Naive thymus-derived CD8-positive, alpha-beta T cell (primary cell): ENCODE measurements at regions of chr16 and their contacts with region 1.

Region 1: GRCh38 chr16:87765776-87766484 is at the start of gene KLHDC4:
- DNase-seq: peak; percentile 83 to 93 (median 88)
- ATAC-seq: peak; percentile 69 to 73
- H3K4me3 Mint-ChIP-seq: peak within 1 kb of the TSS; percentile 97 to 100 (median 99)
- H3K27ac Mint-ChIP-seq: peak within 1 kb of the TSS; percentile 96 to 99 (median 99)
- H3K4me1 Mint-ChIP-seq: peaks cover 16 to 54% (median 52%) of the 10 kb centered on the region in 4 donors
- H3K27me3 Mint-ChIP-seq: no peaks in the 10 kb centered on the region
- polyA plus RNA-seq, gene KLHDC4: 28.7 to 33.3 (median 32.1) TPM

Region 2: DNA sequence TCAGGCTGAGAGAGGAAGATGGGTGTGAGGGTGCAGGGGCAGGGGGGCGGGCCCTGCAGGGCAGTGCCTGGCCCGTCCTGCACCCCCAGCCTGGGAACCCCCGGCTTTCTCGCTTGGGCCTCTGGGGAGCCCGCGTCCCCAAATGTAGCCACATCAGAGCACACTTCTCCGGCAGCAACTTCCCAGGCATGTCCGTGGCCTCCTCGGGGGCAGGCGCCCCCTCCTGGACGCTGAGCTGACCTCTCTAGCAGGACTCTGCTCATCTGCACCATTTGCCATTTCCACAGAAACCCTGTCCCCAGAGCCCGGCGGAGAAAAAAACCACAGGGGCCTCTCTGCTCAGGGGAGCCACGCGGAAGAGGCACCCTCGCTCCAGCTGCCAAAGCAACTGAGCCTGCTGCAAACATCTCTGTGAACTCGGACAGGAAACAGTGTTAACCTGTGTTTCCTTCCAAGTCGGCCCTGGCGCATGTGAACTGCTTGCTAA is 63.6 kb before region 1 on chr16:
- POLR2A ChIA-PET with region 1: interaction called, 13 read pairs
- DNase-seq: peak in 8 of 10 donors; percentile 7 to 42 (median 35)
- ATAC-seq: peak; percentile 69 to 74
- H3K4me3 Mint-ChIP-seq: peak overlapping the region; percentile 47 to 82 (median 68)
- H3K27ac Mint-ChIP-seq: peak overlapping the region; percentile 80 to 92 (median 88)
- H3K4me1 Mint-ChIP-seq: peaks cover 11 to 55% (median 46%) of the 10 kb centered on the region in 4 donors
- H3K27me3 Mint-ChIP-seq: no peaks in the 10 kb centered on the region

Region 3: GRCh38 chr16:87713451-87714229 is 52.3 kb before region 1 on chr16:
- POLR2A ChIA-PET with region 1: interaction called, 12 read pairs
- DNase-seq: peak in 9 of 10 donors; percentile 22 to 85 (median 54)
- ATAC-seq: peak; percentile 94 to 97
- H3K4me3 Mint-ChIP-seq: peak overlapping the region in 9 of 10 donors; percentile 29 to 80 (median 57)
- H3K27ac Mint-ChIP-seq: peak overlapping the region; percentile 25 to 98 (median 94)
- H3K4me1 Mint-ChIP-seq: peaks cover 10 to 53% (median 39%) of the 10 kb centered on the region in 4 donors
- H3K27me3 Mint-ChIP-seq: no peaks in the 10 kb centered on the region

Region 4: GRCh38 chr16:87778830-87779579 is 13.1 kb after region 1 on chr16:
- POLR2A ChIA-PET with region 1: interaction called, 24 read pairs
- DNase-seq: peak; percentile 83 to 93 (median 90)
- ATAC-seq: peak; percentile 85 to 87
- H3K4me3 Mint-ChIP-seq: peak overlapping the region in 9 of 10 donors; percentile 55 to 79 (median 62)
- H3K27ac Mint-ChIP-seq: peak overlapping the region; percentile 60 to 97 (median 90)
- H3K4me1 Mint-ChIP-seq: peaks cover 16 to 44% (median 40%) of the 10 kb centered on the region in 4 donors
- H3K27me3 Mint-ChIP-seq: no peaks in the 10 kb centered on the region

Region 5: DNA sequence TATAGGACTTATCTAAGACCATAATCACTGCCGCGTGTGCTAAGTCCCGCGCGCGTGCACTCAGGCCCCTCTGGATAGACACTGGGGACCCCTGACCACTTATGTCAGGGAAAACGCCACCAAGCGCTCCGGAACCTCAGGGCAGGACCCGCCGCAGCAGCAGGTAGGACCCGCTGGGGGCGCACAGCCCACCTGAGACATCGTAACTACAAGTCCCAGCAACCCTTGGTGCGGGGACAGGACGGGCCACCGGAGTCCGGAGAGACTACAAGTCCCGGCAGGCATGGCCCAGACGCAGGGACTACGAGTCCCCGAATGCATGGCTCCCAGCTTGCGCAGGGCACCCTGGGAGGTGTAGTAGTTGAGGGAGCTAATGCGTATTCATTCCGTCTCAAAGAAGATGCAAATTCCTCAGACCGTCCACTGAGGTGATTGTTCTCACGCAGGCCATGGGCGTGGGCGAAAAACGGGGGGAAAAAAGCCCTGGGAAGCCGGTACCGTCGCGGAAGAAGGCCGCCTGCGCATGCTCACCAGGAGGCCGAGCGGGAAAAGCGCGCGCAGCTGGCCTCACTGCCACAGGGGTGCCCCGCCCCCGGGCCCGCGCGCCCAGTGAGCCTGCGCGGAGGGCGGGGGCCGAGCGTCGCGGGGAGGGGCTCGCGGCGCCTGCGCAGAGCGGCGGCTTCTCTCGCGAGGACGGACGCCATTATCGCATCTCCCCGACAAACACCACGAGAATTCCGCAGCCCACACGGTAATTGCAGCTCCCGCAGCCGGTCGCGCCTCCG is 185.0 kb after region 1 on chr16 and contains the start of gene BANP:
- POLR2A ChIA-PET with region 1: interaction called, 14 read pairs
- DNase-seq: peak; percentile 95 to 99 (median 98)
- ATAC-seq: peak; percentile 95 to 96
- H3K4me3 Mint-ChIP-seq: peak within 1 kb of the TSS; percentile 95 to 100 (median 100)
- H3K27ac Mint-ChIP-seq: peak within 1 kb of the TSS; percentile 98 to 100 (median 100)
- H3K4me1 Mint-ChIP-seq: peaks cover 23 to 68% (median 40%) of the 10 kb centered on the region in 4 donors
- H3K27me3 Mint-ChIP-seq: peaks cover 0 to 3% (median 0%) of the 10 kb centered on the region in 5 donors
- polyA plus RNA-seq, gene BANP: 13.4 to 29.1 (median 15.7) TPM